Heart right ventricle (tissue), 16 donors: ENCODE measurements at regions of chr13 and their contacts with region 1.

Region 1: DNA sequence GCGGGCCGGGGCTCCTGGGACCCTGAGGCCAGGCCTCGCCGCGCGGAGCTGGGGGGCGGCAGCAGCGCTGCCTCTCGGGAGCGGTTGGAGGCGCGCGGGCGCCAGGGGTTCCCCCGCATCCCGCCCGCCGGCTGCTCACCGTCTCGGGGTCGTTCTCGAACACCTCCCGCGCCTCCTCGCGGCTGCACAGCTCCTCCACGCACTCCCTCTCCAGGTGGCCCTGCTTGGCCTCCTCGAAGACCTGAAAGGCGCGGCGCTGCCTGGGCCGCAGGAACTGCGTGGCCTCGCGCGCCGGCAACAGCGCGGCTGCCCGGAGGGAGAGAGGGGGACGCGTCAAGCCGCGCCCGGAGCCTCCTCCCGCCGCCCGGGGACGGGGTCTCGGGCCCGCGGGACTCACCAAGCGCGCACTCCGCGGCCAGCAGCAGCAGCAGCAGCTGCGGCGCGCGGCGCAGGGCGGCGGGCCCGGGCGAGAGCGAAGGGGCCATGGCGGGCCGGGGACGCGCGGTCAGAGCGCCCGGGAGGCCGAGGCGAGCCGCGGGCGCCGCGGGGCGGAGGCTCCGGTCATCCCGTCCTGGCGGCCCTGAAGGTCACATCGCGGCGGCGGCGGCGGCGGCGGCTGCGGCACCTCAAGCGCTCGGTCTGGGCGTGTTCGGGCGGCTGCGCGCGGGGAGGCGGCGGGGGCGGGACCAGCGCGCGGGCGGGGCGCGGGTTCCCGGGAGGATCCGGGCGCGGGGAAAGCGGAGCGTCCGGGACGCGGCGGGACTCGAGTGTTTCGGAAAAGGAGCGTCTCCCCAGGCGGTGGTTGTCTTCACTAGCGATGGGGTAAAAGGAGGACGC is at the start of gene GAS6:
- DNase-seq: peak; percentile 69 to 83
- ATAC-seq: peak; percentile 30 to 79 (median 56)
- H3K4me3 ChIP-seq: peak within 1 kb of the TSS; percentile 70 to 95 (median 86)
- H3K27ac ChIP-seq: peak within 1 kb of the TSS; percentile 92 to 99 (median 97)
- H3K4me1 ChIP-seq: peaks cover 16 to 57% (median 46%) of the 10 kb centered on the region in 9 donors
- H3K27me3 ChIP-seq: peaks cover 0 to 34% (median 0%) of the 10 kb centered on the region in 7 donors
- CTCF ChIP-seq: no peak
- total RNA-seq, gene GAS6: 146 to 223 (median 174) TPM

Region 2: GRCh38 chr13:113881614-113882266 is 18.1 kb after region 1 on chr13:
- intact Hi-C with region 1: loop called in 1 of 10 experiments (anchors 2 kb)
- DNase-seq: peak in 1 of 2 donors; percentile 52
- ATAC-seq: peak; percentile 25 to 62 (median 46)
- H3K4me3 ChIP-seq: peak overlapping the region in 1 of 10 donors; percentile 5
- H3K27ac ChIP-seq: peak overlapping the region; percentile 69 to 94 (median 80)
- H3K4me1 ChIP-seq: peaks cover 12 to 62% (median 43%) of the 10 kb centered on the region in 9 donors
- H3K27me3 ChIP-seq: no peaks in the 10 kb centered on the region
- CTCF ChIP-seq: no peak

Region 3: DNA sequence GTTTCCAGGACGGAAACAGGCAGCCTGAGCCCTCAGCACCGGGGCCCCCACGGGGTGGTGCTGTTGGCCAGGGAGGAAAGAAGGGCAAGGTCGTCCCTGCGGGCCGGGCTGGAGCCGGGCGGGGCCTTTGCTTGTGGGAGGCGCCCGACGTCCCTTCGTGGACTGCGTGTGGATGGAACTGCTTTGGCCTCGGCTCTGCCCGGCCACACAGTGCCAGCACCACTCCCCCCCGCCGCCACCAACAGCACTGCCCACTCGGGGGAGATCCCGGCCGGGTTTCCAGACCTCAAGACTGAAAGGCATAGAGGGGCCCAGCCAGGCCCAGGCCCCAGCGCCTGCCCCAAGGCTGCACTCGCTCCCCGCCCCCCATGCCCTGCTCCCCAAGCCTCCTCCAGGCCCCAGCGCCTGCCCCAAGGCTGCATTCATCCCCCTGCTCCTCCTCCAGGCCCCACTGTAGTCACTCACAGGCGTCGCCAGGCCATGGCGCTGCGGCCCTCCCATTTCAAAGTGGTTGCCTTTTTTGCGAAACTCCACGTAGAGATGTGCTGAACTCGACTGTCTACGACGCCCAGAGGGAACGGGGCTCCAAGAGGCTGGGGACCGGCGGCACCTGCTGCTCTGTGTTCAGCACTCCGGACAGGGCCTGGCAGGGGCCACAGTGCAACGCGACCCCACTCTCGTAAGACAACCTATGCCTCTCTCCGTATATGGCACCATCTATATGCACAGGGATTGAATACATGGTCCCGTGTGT is 87.8 kb after region 1 on chr13:
- intact Hi-C with region 1: loop called in 1 of 10 experiments (anchors 5 kb)
- DNase-seq: peak; percentile 83 to 89
- ATAC-seq: peak; percentile 92 to 96 (median 94)
- H3K4me3 ChIP-seq: peak overlapping the region in 5 of 10 donors; percentile 17 to 32 (median 24)
- H3K27ac ChIP-seq: no peak overlapping the region
- H3K4me1 ChIP-seq: peaks cover 0 to 20% (median 11%) of the 10 kb centered on the region in 9 donors
- H3K27me3 ChIP-seq: no peaks in the 10 kb centered on the region
- CTCF ChIP-seq: peak; percentile 80 to 95 (median 88)